A549 (cell line): ENCODE measurements at regions of chr17 and their contacts with region 1.

Region 1: DNA sequence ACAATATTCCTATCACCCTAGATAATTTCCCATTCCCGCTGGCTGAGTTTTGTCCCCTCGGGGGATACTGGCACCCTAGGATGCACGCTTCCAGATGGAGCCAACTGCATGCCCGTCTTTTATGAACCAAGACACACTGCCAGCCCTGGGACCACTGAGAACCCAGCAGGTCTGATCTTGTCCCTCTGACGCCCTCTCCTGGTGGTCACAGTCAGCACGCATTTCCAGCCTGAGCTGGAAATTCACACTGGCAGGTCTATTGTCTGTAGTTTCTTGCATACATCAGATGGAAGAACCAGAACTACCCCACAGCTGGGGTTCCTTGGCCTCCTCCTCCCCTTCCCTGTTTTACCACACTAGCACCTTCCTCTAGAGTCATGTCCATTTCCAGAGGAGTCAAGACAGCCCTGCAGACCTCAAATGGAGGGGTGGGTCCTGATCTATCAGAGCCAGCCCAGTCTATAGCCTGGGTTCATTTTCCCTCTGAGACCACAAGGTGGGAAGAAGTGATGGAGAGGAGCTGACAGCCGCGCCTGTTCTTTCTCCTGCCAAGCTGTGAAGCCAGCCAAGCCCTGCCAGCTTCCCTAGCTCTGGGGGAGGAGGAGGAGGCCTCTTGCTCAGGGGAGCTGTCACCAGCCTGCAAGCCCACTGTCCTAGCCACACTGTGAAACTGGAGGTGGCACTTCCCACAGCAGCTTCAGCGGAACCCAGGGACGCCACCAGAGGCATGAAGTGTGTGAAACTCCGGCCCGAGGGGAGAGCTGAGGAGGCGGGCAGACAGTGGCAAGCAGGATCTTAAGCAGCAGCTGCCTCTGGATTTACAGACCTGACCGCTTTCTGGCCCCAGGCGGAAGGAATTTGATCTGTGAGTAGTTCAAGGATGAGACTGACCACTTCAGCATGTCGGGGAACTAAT is 29.3 kb downstream of the MXRA7 start:
- DNase-seq: peak; percentile 77 to 84
- ATAC-seq: peak; percentile 75 to 90; a peak in 5 of 6 replicates
- H3K4me3 ChIP-seq: no peak overlapping the region
- H3K27ac ChIP-seq: no peak overlapping the region
- H3K4me1 ChIP-seq: no peaks in the 10 kb centered on the region
- CTCF ChIP-seq: peak; percentile 83
- EP300 ChIP-seq: no peak
- POLR2A ChIP-seq: no peak
- RAD21 ChIP-seq: peak; percentile 82 to 84

Region 2: DNA sequence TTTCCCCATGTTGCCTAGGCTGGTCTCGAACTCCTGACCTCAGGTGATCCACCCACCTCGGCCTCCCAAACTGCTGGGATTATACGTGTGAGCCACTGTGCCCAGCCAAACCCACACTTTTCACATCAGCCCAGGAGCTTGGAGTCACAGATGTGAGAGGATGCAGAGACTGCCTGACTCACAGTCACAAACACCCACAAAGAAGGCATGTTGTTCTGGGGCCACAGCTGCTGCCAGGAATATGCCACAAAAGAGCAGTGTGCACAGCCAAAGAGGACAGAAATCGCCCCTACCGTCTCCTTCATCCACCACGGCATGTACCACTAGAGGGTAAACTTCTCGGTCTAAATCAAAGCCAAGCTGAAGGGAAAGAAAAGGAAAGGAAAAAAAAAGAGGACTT is 515.3 kb before region 1 on chr17:
- CTCF ChIA-PET with region 1: no interaction called
- POLR2A ChIA-PET with region 1: no interaction called
- DNase-seq: no peak
- ATAC-seq: no peak
- H3K4me3 ChIP-seq: no peak overlapping the region
- H3K27ac ChIP-seq: no peak overlapping the region
- H3K4me1 ChIP-seq: no peaks in the 10 kb centered on the region
- CTCF ChIP-seq: no peak
- EP300 ChIP-seq: no peak
- POLR2A ChIP-seq: no peak
- RAD21 ChIP-seq: no peak

Region 3: GRCh38 chr17:76506408-76507349 is 174.8 kb before region 1 on chr17:
- CTCF ChIA-PET with region 1: interaction called, 13 read pairs
- POLR2A ChIA-PET with region 1: no interaction called
- DNase-seq: peak; percentile 71 to 95
- ATAC-seq: peak; percentile 80 to 90
- H3K4me3 ChIP-seq: no peak overlapping the region
- H3K27ac ChIP-seq: peak overlapping the region; percentile 52 to 73; a peak in 5 of 6 replicates
- H3K4me1 ChIP-seq: peaks cover 9% of the 10 kb centered on the region
- CTCF ChIP-seq: peak; percentile 98
- EP300 ChIP-seq: no peak
- POLR2A ChIP-seq: no peak
- RAD21 ChIP-seq: peak; percentile 99

Region 4: GRCh38 chr17:76567634-76568432 is 113.6 kb before region 1 on chr17:
- CTCF ChIA-PET with region 1: interaction called, 22 read pairs
- POLR2A ChIA-PET with region 1: interaction called, 10 read pairs
- DNase-seq: no peak
- ATAC-seq: peak; percentile 30 to 46
- H3K4me3 ChIP-seq: no peak overlapping the region
- H3K27ac ChIP-seq: peak overlapping the region in 1 of 2 experiments; percentile 23; a peak in 2 of 6 replicates
- H3K4me1 ChIP-seq: peaks cover 34% of the 10 kb centered on the region; the same call in 2 of the 3 replicates
- CTCF ChIP-seq: no peak
- EP300 ChIP-seq: no peak
- POLR2A ChIP-seq: no peak
- RAD21 ChIP-seq: no peak

Region 5: GRCh38 chr17:76671123-76671911 is 10.2 kb before region 1 on chr17:
- CTCF ChIA-PET with region 1: interaction called, 123 read pairs
- POLR2A ChIA-PET with region 1: interaction called, 14 read pairs
- DNase-seq: peak; percentile 100
- ATAC-seq: peak; percentile 97 to 99
- H3K4me3 ChIP-seq: peak overlapping the region; percentile 54
- H3K27ac ChIP-seq: peak overlapping the region; percentile 85 to 91
- H3K4me1 ChIP-seq: peaks cover 15% of the 10 kb centered on the region
- CTCF ChIP-seq: no peak
- EP300 ChIP-seq: no peak
- POLR2A ChIP-seq: peak; percentile 66
- RAD21 ChIP-seq: no peak

Region 6: GRCh38 chr17:76726231-76726775 is 44.8 kb after region 1 on chr17 and contains the start of gene JMJD6:
- CTCF ChIA-PET with region 1: interaction called, 456 read pairs
- POLR2A ChIA-PET with region 1: no interaction called
- DNase-seq: peak; percentile 98 to 99
- ATAC-seq: peak; percentile 84 to 91
- H3K4me3 ChIP-seq: peak within 1 kb of the TSS; percentile 97
- H3K27ac ChIP-seq: peak within 1 kb of the TSS; percentile 93 to 99
- H3K4me1 ChIP-seq: peaks cover 17% of the 10 kb centered on the region
- CTCF ChIP-seq: no peak
- EP300 ChIP-seq: no peak
- POLR2A ChIP-seq: peak; percentile 90
- RAD21 ChIP-seq: no peak
- polyA plus RNA-seq, gene JMJD6: 17.5 and 23.0 TPM in 2 replicates

Region 7: DNA sequence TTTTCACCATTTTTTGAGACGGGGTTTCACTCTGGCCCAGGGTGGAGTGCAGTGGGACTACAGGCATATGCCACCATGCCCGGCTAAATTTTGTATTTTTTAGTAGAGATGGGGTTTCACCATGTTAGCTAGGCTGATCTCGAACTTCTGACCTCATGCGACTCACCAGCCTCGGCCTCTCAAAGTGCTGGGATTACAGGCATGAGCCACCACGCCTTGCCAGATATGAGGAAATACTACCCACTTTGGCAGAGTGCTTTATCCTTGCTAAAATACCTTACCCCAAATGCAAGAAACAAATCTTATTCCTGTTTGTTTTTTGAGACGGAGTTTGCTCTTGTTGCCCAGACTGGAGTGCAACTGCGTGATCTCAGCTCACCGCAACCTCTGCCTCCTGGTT is 123.8 kb after region 1 on chr17:
- CTCF ChIA-PET with region 1: no interaction called
- POLR2A ChIA-PET with region 1: no interaction called
- DNase-seq: peak in 1 of 2 experiments; percentile 47
- ATAC-seq: peak in 1 of 2 experiments; percentile 42; a peak in 1 of 6 replicates
- H3K4me3 ChIP-seq: no peak overlapping the region
- H3K27ac ChIP-seq: peak overlapping the region in 1 of 2 experiments; percentile 33; a peak in 1 of 6 replicates
- H3K4me1 ChIP-seq: peaks cover 8% of the 10 kb centered on the region; the same call in 2 of the 3 replicates
- CTCF ChIP-seq: no peak
- EP300 ChIP-seq: no peak
- POLR2A ChIP-seq: no peak
- RAD21 ChIP-seq: no peak